Right ventricle myocardium inferior (tissue), 1 donor: ENCODE measurements at regions of chr11 and their contacts with region 1.

Region 1: GRCh38 chr11:6505577-6506240 is 8.6 kb downstream of the DNHD1 start:
- DNase-seq: no peak
- ATAC-seq: no peak

Region 2: DNA sequence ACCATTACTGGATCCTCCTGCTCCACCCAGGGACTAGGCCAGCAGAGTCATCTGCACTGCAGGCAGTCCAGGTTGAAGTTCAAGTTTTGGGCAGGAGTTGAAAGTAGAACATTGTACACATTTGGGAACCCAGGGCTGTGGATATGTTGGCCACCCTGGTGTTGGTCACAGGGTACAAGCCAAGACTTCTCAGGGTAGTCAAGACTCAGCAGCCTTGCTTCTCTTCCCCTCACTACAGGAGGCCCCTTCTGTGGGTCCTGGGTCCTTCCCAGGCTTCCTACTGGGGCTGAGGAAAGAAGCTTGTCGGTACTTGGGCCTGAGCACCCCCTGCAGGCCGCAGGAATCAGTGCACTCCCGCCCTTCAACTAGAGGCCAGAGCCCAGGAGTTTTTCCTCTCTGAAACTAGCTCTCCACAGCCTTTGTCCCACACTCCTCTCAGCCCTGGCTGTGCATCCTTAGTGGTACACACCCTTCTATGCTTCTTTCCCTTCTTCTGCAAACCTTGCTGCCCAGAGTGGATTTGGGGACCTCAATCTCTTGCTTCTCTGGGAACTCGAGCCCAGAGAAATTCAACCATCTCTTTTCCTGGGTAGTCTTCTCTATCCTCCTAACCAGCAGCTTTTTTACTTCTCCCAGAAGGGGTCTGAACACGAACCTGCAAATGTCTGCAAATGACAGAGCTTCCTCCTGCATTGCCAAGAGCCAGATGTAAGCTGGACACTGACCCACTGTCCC is 62.3 kb before region 1 on chr11:
- intact Hi-C with region 1: loop called (anchors 5 kb)
- DNase-seq: no peak
- ATAC-seq: peak; percentile 76